Activated CD4-positive, alpha-beta memory T cell treated with anti-CD3 and anti-CD28 coated beads, Interleukin-2, amount 10 ng/mL, durations not matched to agents 7 days and 5 days (primary cell): ENCODE measurements at regions of chr19 and their contacts with region 1.

Region 1: GRCh38 chr19:2455851-2456570 is 748 bp downstream of the LMNB2 start:
- DNase-seq: peak; percentile 58
- H3K4me3 Mint-ChIP-seq: peak overlapping the region; percentile 80
- H3K27ac Mint-ChIP-seq: peak overlapping the region; percentile 81
- H3K4me1 Mint-ChIP-seq: peaks cover 29% of the 10 kb centered on the region
- H3K27me3 Mint-ChIP-seq: no peaks in the 10 kb centered on the region

Region 2: GRCh38 chr19:2427429-2428320 is 28.3 kb before region 1 on chr19 and contains the start of gene TIMM13:
- CTCF ChIA-PET with region 1: no interaction called
- POLR2A ChIA-PET with region 1: interaction called, 24 read pairs
- DNase-seq: peak; percentile 97
- H3K4me3 Mint-ChIP-seq: peak within 1 kb of the TSS; percentile 84
- H3K27ac Mint-ChIP-seq: peak within 1 kb of the TSS; percentile 85
- H3K4me1 Mint-ChIP-seq: peaks cover 17% of the 10 kb centered on the region
- H3K27me3 Mint-ChIP-seq: no peaks in the 10 kb centered on the region
- total RNA-seq, gene TIMM13: 44.5 to 47.4 TPM

Region 3: DNA sequence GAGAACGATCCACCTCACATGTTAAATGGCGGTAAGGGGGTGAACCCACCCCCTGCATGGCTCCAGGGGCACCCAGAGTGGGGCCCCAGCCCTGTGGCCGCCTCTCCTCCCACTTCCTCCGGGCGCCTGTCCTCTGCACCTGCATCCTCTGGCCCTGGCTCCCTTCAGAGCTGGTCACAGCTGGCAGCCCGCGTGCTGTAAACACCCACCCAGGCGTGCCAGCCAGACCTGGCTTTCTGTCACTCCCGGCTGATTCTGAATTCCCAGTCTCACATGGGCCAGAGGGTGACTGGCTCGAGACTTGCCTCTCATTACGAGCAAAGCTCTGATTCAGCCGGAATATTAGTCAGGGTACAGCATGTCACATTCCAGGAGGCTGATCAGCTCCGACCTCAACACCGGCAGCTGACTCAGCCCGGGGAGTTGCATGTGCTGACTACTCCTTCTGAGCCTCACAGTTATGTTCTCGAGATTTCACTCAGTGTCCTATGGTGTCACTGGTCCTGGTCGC is 171.4 kb after region 1 on chr19:
- CTCF ChIA-PET with region 1: no interaction called
- POLR2A ChIA-PET with region 1: interaction called, 17 read pairs
- DNase-seq: peak; percentile 46
- H3K4me3 Mint-ChIP-seq: no peak overlapping the region
- H3K27ac Mint-ChIP-seq: peak overlapping the region; percentile 64
- H3K4me1 Mint-ChIP-seq: peaks cover 21% of the 10 kb centered on the region
- H3K27me3 Mint-ChIP-seq: no peaks in the 10 kb centered on the region

Region 4: GRCh38 chr19:2648528-2648937 is 192.5 kb after region 1 on chr19:
- CTCF ChIA-PET with region 1: no interaction called
- POLR2A ChIA-PET with region 1: no interaction called
- DNase-seq: peak; percentile 76
- H3K4me3 Mint-ChIP-seq: no peak overlapping the region
- H3K27ac Mint-ChIP-seq: no peak overlapping the region
- H3K4me1 Mint-ChIP-seq: no peaks in the 10 kb centered on the region
- H3K27me3 Mint-ChIP-seq: peaks cover 5% of the 10 kb centered on the region